PC-9 (cell line): ENCODE measurements at regions of chr17 and their contacts with region 1.

Region 1: DNA sequence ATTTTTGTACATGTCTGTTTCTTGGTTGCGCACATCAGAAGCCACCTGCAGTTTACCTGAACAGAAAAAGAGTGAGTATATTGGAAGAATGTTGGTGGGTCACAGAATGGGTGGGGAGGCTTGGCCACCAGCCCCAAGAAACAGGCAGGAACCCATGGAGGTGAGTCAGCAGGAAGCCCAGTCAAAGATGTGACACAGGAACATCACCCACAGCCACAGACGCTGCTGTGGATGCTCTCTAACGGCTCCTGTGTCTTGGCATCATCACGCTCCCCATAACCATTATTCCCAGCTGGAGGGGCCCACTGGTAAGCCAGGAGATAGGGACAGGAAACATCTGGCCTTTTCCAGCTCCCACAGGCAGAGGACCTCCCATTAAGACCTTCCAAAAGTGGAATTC is 94.0 kb upstream of the WSB1 start:
- DNase-seq: no peak
- H3K4me3 ChIP-seq: no peak overlapping the region
- H3K27ac ChIP-seq: no peak overlapping the region
- H3K4me1 ChIP-seq: peaks cover 11% of the 10 kb centered on the region; the same call in 1 of the 2 replicates
- H3K27me3 ChIP-seq: no peaks in the 10 kb centered on the region
- CTCF ChIP-seq: no peak

Region 2: GRCh38 chr17:27236717-27237315 is 36.9 kb after region 1 on chr17:
- CTCF ChIA-PET with region 1: no interaction called
- POLR2A ChIA-PET with region 1: no interaction called
- intact Hi-C with region 1: loop called (anchors 5 kb)
- DNase-seq: peak; percentile 61 to 68
- H3K4me3 ChIP-seq: no peak overlapping the region
- H3K27ac ChIP-seq: no peak overlapping the region
- H3K4me1 ChIP-seq: peaks cover 34% of the 10 kb centered on the region
- H3K27me3 ChIP-seq: no peaks in the 10 kb centered on the region
- CTCF ChIP-seq: peak; percentile 93

Region 3: GRCh38 chr17:27247071-27247957 is 47.4 kb after region 1 on chr17:
- CTCF ChIA-PET with region 1: no interaction called
- POLR2A ChIA-PET with region 1: no interaction called
- intact Hi-C with region 1: no loop called
- DNase-seq: peak; percentile 72 to 96
- H3K4me3 ChIP-seq: no peak overlapping the region
- H3K27ac ChIP-seq: peak overlapping the region; percentile 78
- H3K4me1 ChIP-seq: peaks cover 64% of the 10 kb centered on the region
- H3K27me3 ChIP-seq: no peaks in the 10 kb centered on the region
- CTCF ChIP-seq: no peak

Region 4: GRCh38 chr17:27323524-27324206 is 123.7 kb after region 1 on chr17:
- CTCF ChIA-PET with region 1: no interaction called
- POLR2A ChIA-PET with region 1: no interaction called
- intact Hi-C with region 1: no loop called
- DNase-seq: peak; percentile 77
- H3K4me3 ChIP-seq: no peak overlapping the region
- H3K27ac ChIP-seq: no peak overlapping the region
- H3K4me1 ChIP-seq: peaks cover 28% of the 10 kb centered on the region
- H3K27me3 ChIP-seq: no peaks in the 10 kb centered on the region
- CTCF ChIP-seq: no peak

Region 5: DNA sequence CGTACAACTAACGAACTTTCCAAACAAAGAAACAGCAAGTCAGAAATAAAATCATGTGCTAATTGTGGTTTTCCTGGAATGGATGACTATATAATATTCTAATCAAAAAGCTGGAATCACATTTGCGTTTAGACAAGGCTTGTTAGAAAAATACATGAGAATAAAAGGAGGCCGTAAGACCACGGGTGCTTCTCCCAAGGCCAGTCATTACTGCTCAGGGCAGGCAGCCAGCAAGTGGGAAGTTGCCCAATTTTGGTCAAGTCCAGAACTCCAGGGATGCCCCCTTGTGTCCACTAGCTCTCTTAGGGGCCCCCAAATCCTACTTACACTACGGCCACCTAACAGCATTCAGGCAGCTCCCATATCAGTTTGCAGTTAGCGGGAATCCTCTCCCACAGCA is 719.1 kb after region 1 on chr17:
- CTCF ChIA-PET with region 1: no interaction called
- POLR2A ChIA-PET with region 1: no interaction called
- intact Hi-C with region 1: no loop called
- DNase-seq: no peak
- H3K4me3 ChIP-seq: no peak overlapping the region
- H3K27ac ChIP-seq: no peak overlapping the region
- H3K4me1 ChIP-seq: no peaks in the 10 kb centered on the region
- H3K27me3 ChIP-seq: peaks cover 23% of the 10 kb centered on the region
- CTCF ChIP-seq: no peak